Natural killer cell (primary cell): ENCODE measurements at regions of chr1 and their contacts with region 1.

Region 1: GRCh38 chr1:65067491-65068201 is 80.4 kb upstream of the AK4 start:
- DNase-seq: peak; percentile 47 to 84
- ATAC-seq: peak; percentile 13 to 42 (median 14)
- H3K4me3 ChIP-seq: peak overlapping the region; percentile 74
- H3K4me3 Mint-ChIP-seq: peak overlapping the region; percentile 99
- H3K27ac ChIP-seq: peak overlapping the region; percentile 91
- H3K27ac Mint-ChIP-seq: peak overlapping the region; percentile 97
- H3K4me1 ChIP-seq: peaks cover 19% of the 10 kb centered on the region
- H3K4me1 Mint-ChIP-seq: peaks cover 44 to 54% of the 10 kb centered on the region in 2 donors
- H3K27me3 ChIP-seq: no peaks in the 10 kb centered on the region
- H3K27me3 Mint-ChIP-seq: no peaks in the 10 kb centered on the region
- CTCF ChIP-seq: no peak

Region 2: GRCh38 chr1:65165269-65165993 is 97.8 kb after region 1 on chr1:
- intact Hi-C with region 1: no loop called
- DNase-seq: no peak
- ATAC-seq: no peak
- H3K4me3 ChIP-seq: no peak overlapping the region
- H3K4me3 Mint-ChIP-seq: no peak overlapping the region
- H3K27ac ChIP-seq: no peak overlapping the region
- H3K27ac Mint-ChIP-seq: no peak overlapping the region
- H3K4me1 ChIP-seq: no peaks in the 10 kb centered on the region
- H3K4me1 Mint-ChIP-seq: no peaks in the 10 kb centered on the region
- H3K27me3 ChIP-seq: no peaks in the 10 kb centered on the region
- H3K27me3 Mint-ChIP-seq: peaks cover 27 to 29% of the 10 kb centered on the region in 2 donors
- CTCF ChIP-seq: no peak

Region 3: DNA sequence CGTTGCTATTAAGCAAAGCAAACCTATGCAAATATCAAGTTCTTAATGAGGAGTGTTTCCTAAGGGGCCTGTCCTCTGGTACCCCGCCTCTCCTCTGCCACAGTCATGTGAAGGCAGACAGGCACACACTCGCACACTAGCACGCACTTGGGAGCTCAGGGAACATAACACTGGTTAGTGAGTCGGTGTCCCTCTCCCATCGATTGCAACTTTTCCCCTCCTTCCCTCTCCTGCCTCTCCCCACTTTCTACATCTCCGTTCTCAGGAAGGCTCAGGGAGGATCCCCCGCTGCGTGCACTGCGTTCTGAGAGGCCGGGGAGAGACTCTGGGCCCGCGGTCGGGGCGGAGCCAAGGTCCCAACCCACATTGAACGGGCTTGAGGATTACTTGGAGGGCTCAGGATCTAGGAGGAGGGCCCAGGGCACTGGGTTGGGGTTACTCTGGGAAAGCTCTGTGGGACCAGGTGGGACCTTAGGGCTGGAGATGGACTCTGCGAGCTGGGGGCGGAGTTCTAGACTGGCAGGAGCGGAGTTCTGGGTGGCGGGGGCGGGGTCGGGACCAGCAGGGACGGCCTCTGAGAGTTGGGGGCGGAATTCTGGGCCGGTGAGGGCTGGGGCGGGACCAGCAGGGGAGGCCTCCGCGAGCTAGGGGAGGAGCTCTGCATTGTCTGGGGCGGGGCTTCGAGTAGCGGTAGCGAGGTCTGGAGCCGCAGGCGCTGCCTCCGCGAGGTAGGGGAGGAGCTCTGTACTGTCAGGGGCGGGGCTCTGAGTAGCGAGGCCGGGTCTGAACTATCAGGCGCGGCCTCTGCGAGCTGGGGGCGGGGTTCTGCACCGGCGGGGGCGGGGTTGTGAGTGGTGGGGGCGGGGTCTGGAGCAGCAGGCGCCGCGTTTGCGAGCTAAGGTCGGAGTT is 352.3 kb after region 1 on chr1:
- intact Hi-C with region 1: loop called (anchors 2 kb)
- DNase-seq: peak; percentile 94 to 99
- ATAC-seq: peak; percentile 94 to 99 (median 94)
- H3K4me3 ChIP-seq: peak overlapping the region; percentile 92
- H3K4me3 Mint-ChIP-seq: peak overlapping the region; percentile 93
- H3K27ac ChIP-seq: peak overlapping the region; percentile 66
- H3K27ac Mint-ChIP-seq: peak overlapping the region in 1 of 2 donors; percentile 73
- H3K4me1 ChIP-seq: peaks cover 13% of the 10 kb centered on the region
- H3K4me1 Mint-ChIP-seq: peaks cover 12 to 14% of the 10 kb centered on the region in 2 donors
- H3K27me3 ChIP-seq: no peaks in the 10 kb centered on the region
- H3K27me3 Mint-ChIP-seq: peaks cover 8 to 27% of the 10 kb centered on the region in 2 donors
- CTCF ChIP-seq: no peak